ENCODE measurements at regions of chr5 and their contacts with region 1.

Region 1: DNA sequence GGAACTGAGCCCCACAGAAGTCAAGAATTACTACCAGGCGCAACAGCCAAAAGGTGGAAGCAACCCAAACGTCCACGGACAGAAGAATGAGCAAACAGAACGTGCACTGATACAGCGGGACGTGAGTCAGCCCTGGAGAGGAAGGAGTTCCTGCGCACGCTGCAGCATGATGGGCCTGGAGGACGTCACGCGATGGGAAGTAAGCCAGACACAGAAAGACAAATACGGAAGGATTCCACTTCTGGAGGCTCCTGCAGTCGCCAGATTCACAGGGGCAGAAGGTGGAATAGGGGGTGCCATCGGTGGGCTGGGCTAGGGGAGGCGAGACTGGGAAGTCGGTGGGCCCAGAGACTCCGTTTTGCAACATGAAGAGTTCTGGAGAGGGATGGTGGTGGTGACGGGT is 80.3 kb upstream of the PHYKPL start:
- DNase-seq: no peak
- H3K4me3 ChIP-seq: no peak overlapping the region
- CTCF ChIP-seq: no peak
- POLR2A ChIP-seq: no peak

Region 2: GRCh38 chr5:178535299-178536175 is 222.7 kb after region 1 on chr5:
- intact Hi-C with region 1: loop called (anchors 5 kb)
- DNase-seq: peak in 1 of 2 donors; percentile 39
- H3K4me3 ChIP-seq: no peak overlapping the region
- CTCF ChIP-seq: no peak
- POLR2A ChIP-seq: no peak